Right cardiac atrium (tissue), 5 donors: ENCODE measurements at regions of chr2 and their contacts with region 1.

Region 1: GRCh38 chr2:202299712-202300111 is 34.1 kb downstream of the NOP58 start:
- DNase-seq: no peak
- ATAC-seq: no peak
- H3K4me3 ChIP-seq: no peak overlapping the region
- H3K27ac ChIP-seq: no peak overlapping the region
- H3K4me1 ChIP-seq: no peaks in the 10 kb centered on the region
- H3K27me3 ChIP-seq: no peaks in the 10 kb centered on the region

Region 2: DNA sequence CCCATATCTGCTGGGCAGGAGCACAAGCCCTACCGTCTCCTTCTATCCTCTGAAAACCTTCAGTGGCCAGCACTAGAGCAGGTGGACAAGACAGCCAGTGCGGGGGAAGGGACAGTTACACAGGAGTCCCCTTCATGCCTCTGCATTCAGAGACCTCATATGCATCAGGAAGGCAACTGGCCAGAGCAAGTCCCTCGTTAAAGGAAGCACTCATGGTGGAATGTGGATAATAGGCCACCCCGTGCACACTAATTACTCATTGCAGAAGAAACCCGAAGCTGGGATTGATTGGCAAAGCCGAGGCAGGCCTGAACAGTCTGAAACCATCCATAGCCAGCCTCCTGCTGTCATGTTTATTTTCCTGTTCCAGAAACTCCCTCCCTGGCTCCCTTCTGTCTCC is 215.4 kb before region 1 on chr2:
- intact Hi-C with region 1: no loop called
- DNase-seq: no peak
- ATAC-seq: peak in 1 of 2 donors; percentile 34
- H3K4me3 ChIP-seq: no peak overlapping the region
- H3K27ac ChIP-seq: no peak overlapping the region
- H3K4me1 ChIP-seq: peaks cover 4% of the 10 kb centered on the region
- H3K27me3 ChIP-seq: no peaks in the 10 kb centered on the region

Region 3: GRCh38 chr2:202529389-202529788 is 229.7 kb after region 1 on chr2:
- intact Hi-C with region 1: loop called in 1 of 4 experiments (anchors 10 kb)
- DNase-seq: no peak
- ATAC-seq: no peak
- H3K4me3 ChIP-seq: no peak overlapping the region
- H3K27ac ChIP-seq: no peak overlapping the region
- H3K4me1 ChIP-seq: no peaks in the 10 kb centered on the region
- H3K27me3 ChIP-seq: no peaks in the 10 kb centered on the region